ENCODE measurements at regions of chr17 and their contacts with region 1.

Region 1: DNA sequence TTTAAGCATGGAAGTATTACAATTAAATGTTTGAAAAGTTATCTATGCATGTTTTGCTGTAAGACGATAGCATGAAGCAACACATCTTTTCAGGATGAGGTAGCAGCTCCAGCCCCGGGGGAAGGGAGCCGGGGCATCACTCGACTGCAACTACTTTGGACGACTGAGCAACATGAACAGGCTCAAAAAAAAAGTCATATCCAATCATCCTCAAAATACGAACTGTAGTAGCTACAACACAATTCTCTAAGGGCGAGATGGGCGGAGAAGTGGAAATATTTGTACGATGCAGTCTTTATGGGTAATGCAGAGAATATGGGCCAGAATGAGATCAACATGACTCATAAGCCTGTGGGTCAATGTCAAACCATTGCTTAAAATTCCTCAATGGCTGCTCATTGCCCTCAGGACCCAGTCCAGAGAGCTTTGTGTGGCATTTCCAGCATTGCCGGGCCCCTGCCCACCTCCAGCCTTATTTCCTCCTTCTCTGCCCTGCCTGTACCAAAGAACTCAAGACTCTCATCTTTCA is 17.6 kb upstream of the SMURF2 start:
- DNase-seq: peak; percentile 99
- ATAC-seq: peak; percentile 78
- H3K4me3 ChIP-seq: peak overlapping the region; percentile 40; the same call in 1 of the 2 replicates
- H3K27ac ChIP-seq: peak overlapping the region; percentile 91
- H3K4me1 ChIP-seq: peaks cover 27% of the 10 kb centered on the region
- H3K27me3 ChIP-seq: no peaks in the 10 kb centered on the region
- CTCF ChIP-seq: no peak
- POLR2A ChIP-seq: no peak; the same call in 1 of the 2 replicates
- RAD21 ChIP-seq: no peak; the same call in 1 of the 2 replicates

Region 2: GRCh38 chr17:64572638-64573154 is 107.1 kb before region 1 on chr17:
- CTCF ChIA-PET with region 1: no interaction called
- POLR2A ChIA-PET with region 1: interaction called, 10 read pairs
- dilution Hi-C with region 1: no loop called
- in situ Hi-C with region 1: no loop called
- intact Hi-C with region 1: no loop called
- DNase-seq: peak; percentile 61
- ATAC-seq: peak; percentile 18
- H3K4me3 ChIP-seq: no peak overlapping the region
- H3K27ac ChIP-seq: peak overlapping the region; percentile 42; the same call in 1 of the 2 replicates
- H3K4me1 ChIP-seq: peaks cover 8% of the 10 kb centered on the region; the same call in 1 of the 2 replicates
- H3K27me3 ChIP-seq: no peaks in the 10 kb centered on the region
- CTCF ChIP-seq: no peak
- POLR2A ChIP-seq: no peak
- RAD21 ChIP-seq: no peak

Region 3: DNA sequence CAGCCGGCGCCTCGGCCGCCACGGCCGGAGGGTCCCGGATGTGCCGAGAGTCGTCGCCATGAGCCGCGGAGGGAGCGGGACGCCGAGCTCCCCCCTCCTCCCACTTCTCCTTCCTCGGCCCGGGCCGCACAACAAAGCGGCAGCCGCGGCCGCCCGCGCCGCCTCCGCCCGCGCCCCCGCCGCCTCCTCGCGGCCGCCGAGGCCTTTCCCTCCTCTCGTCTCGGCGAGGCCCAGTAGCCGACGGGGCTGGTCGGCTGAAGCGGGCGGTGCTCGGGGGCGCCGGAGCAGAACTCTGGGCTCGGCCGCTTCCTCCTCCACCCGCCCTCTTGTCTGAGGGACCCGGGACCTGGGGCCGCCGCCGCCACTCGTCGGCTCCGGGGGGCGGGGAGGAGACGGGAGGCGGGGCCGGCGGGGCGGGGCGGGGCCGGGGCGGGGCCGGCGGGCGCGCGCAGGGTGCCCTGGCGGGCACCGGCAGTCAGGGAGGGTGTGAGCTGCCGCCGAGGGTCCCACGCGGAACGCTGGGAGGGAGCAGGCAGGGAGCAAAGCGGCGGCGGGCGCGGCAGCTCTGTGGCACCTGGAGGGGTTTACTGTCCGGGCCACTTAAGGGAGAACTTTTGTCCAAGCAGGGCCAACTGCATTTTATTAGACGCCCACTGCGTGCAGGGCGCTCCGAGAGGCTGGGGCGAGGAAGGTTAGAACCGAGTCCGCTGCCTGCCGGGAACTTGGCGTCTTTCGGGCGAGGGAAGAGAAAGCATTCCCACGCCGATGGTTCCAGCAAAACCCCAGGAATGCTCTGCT is 17.6 kb before region 1 on chr17 and contains the start of gene SMURF2:
- CTCF ChIA-PET with region 1: no interaction called
- POLR2A ChIA-PET with region 1: interaction called, 3 read pairs
- dilution Hi-C with region 1: no loop called
- in situ Hi-C with region 1: no loop called
- intact Hi-C with region 1: loop called (anchors 2 kb)
- DNase-seq: peak; percentile 61
- ATAC-seq: peak; percentile 82
- H3K4me3 ChIP-seq: peak within 1 kb of the TSS; percentile 85
- H3K27ac ChIP-seq: peak within 1 kb of the TSS; percentile 99
- H3K4me1 ChIP-seq: peaks cover 11% of the 10 kb centered on the region
- H3K27me3 ChIP-seq: no peaks in the 10 kb centered on the region
- CTCF ChIP-seq: no peak
- POLR2A ChIP-seq: peak; percentile 96
- RAD21 ChIP-seq: no peak
- total RNA-seq, gene SMURF2: 736 and 774 TPM in 2 replicates

Region 4: GRCh38 chr17:64707019-64707591 is 27.4 kb after region 1 on chr17:
- CTCF ChIA-PET with region 1: no interaction called
- POLR2A ChIA-PET with region 1: interaction called, 3 read pairs
- dilution Hi-C with region 1: no loop called
- in situ Hi-C with region 1: no loop called
- intact Hi-C with region 1: loop called (anchors 1 kb)
- DNase-seq: peak; percentile 100
- ATAC-seq: peak; percentile 81
- H3K4me3 ChIP-seq: no peak overlapping the region
- H3K27ac ChIP-seq: peak overlapping the region; percentile 76
- H3K4me1 ChIP-seq: peaks cover 24% of the 10 kb centered on the region
- H3K27me3 ChIP-seq: no peaks in the 10 kb centered on the region
- CTCF ChIP-seq: no peak
- POLR2A ChIP-seq: 0 out of 2 replicates have a peak, but pooled peaks have one; percentile 15
- RAD21 ChIP-seq: peak; percentile 20; the same call in 1 of the 2 replicates

Region 5: DNA sequence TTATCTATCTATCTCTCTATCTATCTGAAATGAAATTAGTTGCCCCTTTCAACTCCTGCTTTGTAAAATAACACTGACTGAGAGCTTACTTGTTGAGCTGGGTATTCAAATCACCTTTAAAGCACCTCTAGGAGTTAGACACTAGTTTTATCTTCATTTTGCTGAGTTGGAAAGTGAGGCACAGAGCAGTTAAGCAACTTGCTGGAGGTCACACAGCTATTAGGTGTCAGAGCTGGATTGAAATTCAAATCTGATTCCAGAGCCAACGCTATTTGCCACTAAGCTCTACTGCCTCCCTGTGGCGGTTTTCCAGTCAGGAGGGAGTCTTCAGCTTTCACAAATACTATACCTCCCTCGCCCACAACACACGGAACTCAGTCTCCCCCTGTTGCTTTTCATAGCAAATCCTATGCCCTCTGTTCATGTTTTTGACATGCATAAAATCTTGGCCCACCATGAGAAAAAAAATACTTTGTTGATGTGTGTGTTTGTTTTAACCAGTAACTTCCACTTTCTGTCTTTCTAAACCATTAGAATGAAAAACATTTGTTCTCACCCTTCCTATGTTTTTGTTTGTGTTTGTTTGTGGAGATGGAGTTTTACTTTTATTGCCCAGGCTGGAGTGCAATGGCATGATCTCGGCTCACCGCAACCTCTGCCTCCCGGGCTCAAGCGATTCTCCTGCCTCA is 57.2 kb after region 1 on chr17:
- CTCF ChIA-PET with region 1: interaction called, 3 read pairs
- POLR2A ChIA-PET with region 1: no interaction called
- dilution Hi-C with region 1: no loop called
- in situ Hi-C with region 1: no loop called
- intact Hi-C with region 1: loop called (anchors 5 kb)
- DNase-seq: peak; percentile 72
- ATAC-seq: peak; percentile 24
- H3K4me3 ChIP-seq: no peak overlapping the region
- H3K27ac ChIP-seq: no peak overlapping the region
- H3K4me1 ChIP-seq: peaks cover 32% of the 10 kb centered on the region
- H3K27me3 ChIP-seq: no peaks in the 10 kb centered on the region
- CTCF ChIP-seq: peak; percentile 64
- POLR2A ChIP-seq: no peak
- RAD21 ChIP-seq: peak; percentile 73